H1 (cell line): ENCODE measurements at regions of chr13 and their contacts with region 1.

Region 1: GRCh38 chr13:65656740-65657329 is 1573.3 kb downstream of the PCDH9 start:
- DNase-seq: no peak
- H3K4me3 ChIP-seq: no peak overlapping the region
- H3K27ac ChIP-seq: no peak overlapping the region
- H3K4me1 ChIP-seq: no peaks in the 10 kb centered on the region
- H3K27me3 ChIP-seq: no peaks in the 10 kb centered on the region
- CTCF ChIP-seq: peak in 2 of 3 experiments; percentile 13 to 29; a peak in 2 of 4 replicates
- EP300 ChIP-seq: no peak
- POLR2A ChIP-seq: no peak
- RAD21 ChIP-seq: peak; percentile 44 to 51

Region 2: GRCh38 chr13:65638572-65639168 is 18.2 kb before region 1 on chr13:
- CTCF ChIA-PET with region 1: no interaction called
- POLR2A ChIA-PET with region 1: no interaction called
- DNase-seq: no peak
- H3K4me3 ChIP-seq: no peak overlapping the region; a peak in 1 of 8 replicates
- H3K27ac ChIP-seq: no peak overlapping the region
- H3K4me1 ChIP-seq: no peaks in the 10 kb centered on the region
- H3K27me3 ChIP-seq: no peaks in the 10 kb centered on the region
- CTCF ChIP-seq: peak in 2 of 3 experiments; percentile 56 to 74; a peak in 3 of 4 replicates
- EP300 ChIP-seq: no peak
- POLR2A ChIP-seq: no peak
- RAD21 ChIP-seq: peak; percentile 89

Region 3: DNA sequence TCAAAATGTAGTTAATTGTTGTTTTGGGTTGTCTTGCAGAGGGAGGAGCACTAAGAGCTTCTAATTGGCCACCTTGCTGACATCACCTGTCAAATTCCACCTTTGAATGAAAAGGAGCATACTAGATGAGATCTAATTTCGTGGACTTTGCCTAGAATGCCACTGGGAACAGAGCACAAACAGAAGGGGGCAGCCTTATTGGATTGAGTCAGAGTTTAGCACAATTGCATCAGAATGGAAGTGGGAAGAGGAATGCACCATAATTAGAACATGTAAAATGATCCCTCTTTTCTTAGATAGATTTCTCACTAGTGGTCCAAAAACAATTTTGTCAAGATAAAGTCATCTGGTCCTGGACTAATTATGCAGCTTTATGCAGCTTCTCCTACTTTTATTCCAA is 21.1 kb after region 1 on chr13:
- CTCF ChIA-PET with region 1: interaction called, 13 read pairs
- POLR2A ChIA-PET with region 1: no interaction called
- DNase-seq: no peak
- H3K4me3 ChIP-seq: no peak overlapping the region
- H3K27ac ChIP-seq: no peak overlapping the region
- H3K4me1 ChIP-seq: no peaks in the 10 kb centered on the region; a peak in 2 of 7 replicates
- H3K27me3 ChIP-seq: no peaks in the 10 kb centered on the region
- CTCF ChIP-seq: peak in 1 of 3 experiments; percentile 16; a peak in 1 of 4 replicates
- EP300 ChIP-seq: no peak
- POLR2A ChIP-seq: no peak
- RAD21 ChIP-seq: 0 out of 4 replicates have a peak, but pooled peaks of 1 of the 2 experiments have one; percentile 2

Region 4: GRCh38 chr13:65825039-65825438 is 168.2 kb after region 1 on chr13:
- CTCF ChIA-PET with region 1: no interaction called
- POLR2A ChIA-PET with region 1: no interaction called
- DNase-seq: no peak
- H3K4me3 ChIP-seq: no peak overlapping the region
- H3K27ac ChIP-seq: no peak overlapping the region
- H3K4me1 ChIP-seq: no peaks in the 10 kb centered on the region
- H3K27me3 ChIP-seq: no peaks in the 10 kb centered on the region
- CTCF ChIP-seq: no peak
- EP300 ChIP-seq: no peak
- POLR2A ChIP-seq: no peak
- RAD21 ChIP-seq: no peak